Aorta (tissue), 5 donors: ENCODE measurements at regions of chr9 and their contacts with region 1.

Region 1: GRCh38 chr9:119477197-119477596 is 108.0 kb upstream of the BRINP1 start:
- DNase-seq: peak in 1 of 2 donors; percentile 71
- ATAC-seq: no peak
- H3K4me3 ChIP-seq: no peak overlapping the region
- H3K27ac ChIP-seq: no peak overlapping the region
- H3K4me1 ChIP-seq: no peaks in the 10 kb centered on the region
- H3K27me3 ChIP-seq: no peaks in the 10 kb centered on the region

Region 2: GRCh38 chr9:119240546-119240945 is 236.7 kb before region 1 on chr9:
- intact Hi-C with region 1: no loop called
- DNase-seq: no peak
- ATAC-seq: no peak
- H3K4me3 ChIP-seq: no peak overlapping the region
- H3K27ac ChIP-seq: no peak overlapping the region
- H3K4me1 ChIP-seq: no peaks in the 10 kb centered on the region
- H3K27me3 ChIP-seq: no peaks in the 10 kb centered on the region

Region 3: DNA sequence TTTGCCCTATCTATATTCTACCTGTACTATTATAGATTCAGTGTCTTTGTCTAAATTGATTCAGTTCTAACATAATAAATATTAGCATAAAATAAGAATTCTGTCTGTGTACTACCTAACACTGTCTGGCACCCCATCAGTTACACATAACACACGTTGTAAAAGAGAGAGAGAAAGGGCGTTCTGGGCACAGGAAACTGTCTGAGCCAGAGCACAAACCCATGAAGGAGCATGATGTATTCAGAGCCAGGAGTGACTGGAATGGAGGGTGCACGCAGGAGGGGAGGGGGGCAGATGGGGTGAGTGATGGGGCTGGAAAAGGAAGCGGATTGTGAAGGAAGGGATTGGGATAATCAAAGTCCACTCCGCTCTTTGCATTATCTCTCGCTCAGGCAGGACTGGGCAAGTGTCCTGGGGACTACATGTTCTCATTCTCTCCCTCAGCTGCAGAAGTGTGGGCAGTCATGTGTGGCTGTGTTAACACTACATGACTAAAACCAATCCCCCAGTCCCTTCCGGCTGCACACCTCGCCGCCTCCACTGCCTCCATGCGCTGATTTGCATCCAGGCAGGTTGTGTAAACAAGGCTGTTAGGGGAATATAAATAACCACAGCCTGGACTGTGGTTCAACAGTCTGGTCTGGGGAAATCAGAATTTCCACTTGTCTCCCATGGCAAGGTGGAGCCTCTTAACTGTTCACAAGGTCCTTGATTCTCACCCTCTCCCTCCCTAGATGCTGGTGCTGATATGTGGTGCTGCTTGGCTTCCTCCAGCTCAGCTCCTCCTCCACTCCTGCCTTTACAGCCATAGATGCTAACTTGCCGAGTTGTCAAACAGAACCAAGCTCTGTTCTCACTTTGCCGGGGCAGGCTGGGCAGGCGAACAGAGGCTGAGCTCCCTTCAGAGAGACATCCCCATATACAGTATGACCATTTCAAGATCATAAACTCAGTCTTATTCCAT is 259.6 kb after region 1 on chr9:
- intact Hi-C with region 1: loop called in 1 of 2 experiments (anchors 10 kb)
- DNase-seq: no peak
- ATAC-seq: no peak
- H3K4me3 ChIP-seq: no peak overlapping the region
- H3K27ac ChIP-seq: no peak overlapping the region
- H3K4me1 ChIP-seq: no peaks in the 10 kb centered on the region
- H3K27me3 ChIP-seq: no peaks in the 10 kb centered on the region